Activated T-helper 1 cell treated with anti-CD3 and anti-CD28 coated beads, Interleukin-12 subunit alpha, Interleukin-12 subunit beta, Interleukin-2, Interleukin-4 antibody, amounts not matched to agents 30 ng/mL and 10 ng/mL and 1 ng/mL, durations not matched to agents 14 hours and 24 hours and 36 hours (primary cell): ENCODE measurements at regions of chr2 and their contacts with region 1.

Region 1: GRCh38 chr2:190843874-190844699 is 36.5 kb upstream of the GLS start:
- DNase-seq: peak; percentile 17
- H3K4me3 Mint-ChIP-seq: peak overlapping the region; percentile 44
- H3K27ac Mint-ChIP-seq: peak overlapping the region; percentile 96
- H3K4me1 Mint-ChIP-seq: peaks cover 15% of the 10 kb centered on the region
- H3K27me3 Mint-ChIP-seq: no peaks in the 10 kb centered on the region

Region 2: GRCh38 chr2:190648289-190649034 is 195.6 kb before region 1 on chr2:
- intact Hi-C with region 1: loop called (anchors 5 kb)
- DNase-seq: peak; percentile 84
- H3K4me3 Mint-ChIP-seq: peak overlapping the region; percentile 78
- H3K27ac Mint-ChIP-seq: peak overlapping the region; percentile 82
- H3K4me1 Mint-ChIP-seq: peaks cover 48% of the 10 kb centered on the region
- H3K27me3 Mint-ChIP-seq: no peaks in the 10 kb centered on the region

Region 3: GRCh38 chr2:190759749-190760213 is 84.3 kb before region 1 on chr2:
- intact Hi-C with region 1: no loop called
- DNase-seq: no peak
- H3K4me3 Mint-ChIP-seq: no peak overlapping the region
- H3K27ac Mint-ChIP-seq: peak overlapping the region; percentile 4
- H3K4me1 Mint-ChIP-seq: peaks cover 41% of the 10 kb centered on the region
- H3K27me3 Mint-ChIP-seq: no peaks in the 10 kb centered on the region

Region 4: DNA sequence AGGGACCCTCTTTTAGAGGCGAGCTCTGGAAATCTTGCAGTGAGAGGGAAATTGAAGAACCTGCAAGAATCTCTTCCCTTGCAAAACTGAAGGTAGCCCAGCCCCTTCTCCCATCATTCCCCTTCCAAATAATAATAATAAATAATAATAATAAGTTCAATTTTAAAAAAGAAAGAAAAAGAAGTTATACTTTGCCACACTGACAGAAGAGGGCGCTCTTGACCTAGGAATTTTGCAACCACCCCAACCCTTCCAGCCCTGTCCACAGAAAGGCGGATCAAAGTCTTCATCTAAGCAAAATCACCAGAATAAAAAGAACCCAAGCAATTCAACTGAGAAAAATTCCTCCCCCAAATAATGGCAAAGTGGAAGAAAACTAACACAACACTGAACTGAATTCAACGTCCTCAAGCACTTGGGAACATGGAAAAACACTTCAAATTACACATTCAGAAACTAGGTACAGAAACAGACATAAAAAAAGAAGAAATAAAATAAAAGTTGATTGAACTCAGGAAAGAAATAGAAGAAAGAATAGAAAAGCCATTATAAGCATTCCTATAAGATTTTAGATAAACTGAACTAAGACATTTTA is 62.4 kb before region 1 on chr2:
- intact Hi-C with region 1: loop called (anchors 1 kb)
- DNase-seq: peak; percentile 11
- H3K4me3 Mint-ChIP-seq: no peak overlapping the region
- H3K27ac Mint-ChIP-seq: peak overlapping the region; percentile 45
- H3K4me1 Mint-ChIP-seq: peaks cover 43% of the 10 kb centered on the region
- H3K27me3 Mint-ChIP-seq: no peaks in the 10 kb centered on the region

Region 5: DNA sequence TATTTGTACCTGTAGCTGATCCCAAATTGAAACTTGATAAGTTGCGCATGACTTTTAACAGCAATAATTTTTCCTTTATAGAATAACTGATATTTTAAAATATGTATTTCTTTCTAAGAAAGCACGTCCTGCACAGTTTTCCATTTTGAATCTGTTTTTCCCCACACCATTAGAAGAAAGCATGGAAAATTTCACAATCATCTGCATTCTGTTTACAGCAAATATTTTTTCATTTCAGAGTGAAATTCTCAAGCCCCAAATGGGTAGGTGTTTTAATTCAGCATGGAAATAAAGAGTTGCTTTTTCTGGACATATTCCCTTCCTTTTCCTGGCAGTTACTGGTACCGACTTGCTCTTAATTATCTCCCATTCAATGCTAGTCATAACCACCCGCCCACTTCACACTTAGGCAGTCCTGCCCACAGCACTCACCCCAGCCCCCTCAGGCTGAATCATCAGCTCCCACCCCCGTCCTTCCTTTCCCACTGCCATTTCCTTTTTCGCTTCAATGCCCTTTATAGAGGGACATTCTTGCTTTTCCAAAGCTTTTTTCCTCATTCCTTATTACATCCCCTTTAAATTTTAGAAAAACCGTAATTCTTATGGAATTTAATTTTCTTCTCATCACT is 52.6 kb before region 1 on chr2:
- intact Hi-C with region 1: loop called (anchors 1 kb)
- DNase-seq: no peak
- H3K4me3 Mint-ChIP-seq: peak overlapping the region; percentile 19
- H3K27ac Mint-ChIP-seq: peak overlapping the region; percentile 74
- H3K4me1 Mint-ChIP-seq: peaks cover 76% of the 10 kb centered on the region
- H3K27me3 Mint-ChIP-seq: no peaks in the 10 kb centered on the region

Region 6: DNA sequence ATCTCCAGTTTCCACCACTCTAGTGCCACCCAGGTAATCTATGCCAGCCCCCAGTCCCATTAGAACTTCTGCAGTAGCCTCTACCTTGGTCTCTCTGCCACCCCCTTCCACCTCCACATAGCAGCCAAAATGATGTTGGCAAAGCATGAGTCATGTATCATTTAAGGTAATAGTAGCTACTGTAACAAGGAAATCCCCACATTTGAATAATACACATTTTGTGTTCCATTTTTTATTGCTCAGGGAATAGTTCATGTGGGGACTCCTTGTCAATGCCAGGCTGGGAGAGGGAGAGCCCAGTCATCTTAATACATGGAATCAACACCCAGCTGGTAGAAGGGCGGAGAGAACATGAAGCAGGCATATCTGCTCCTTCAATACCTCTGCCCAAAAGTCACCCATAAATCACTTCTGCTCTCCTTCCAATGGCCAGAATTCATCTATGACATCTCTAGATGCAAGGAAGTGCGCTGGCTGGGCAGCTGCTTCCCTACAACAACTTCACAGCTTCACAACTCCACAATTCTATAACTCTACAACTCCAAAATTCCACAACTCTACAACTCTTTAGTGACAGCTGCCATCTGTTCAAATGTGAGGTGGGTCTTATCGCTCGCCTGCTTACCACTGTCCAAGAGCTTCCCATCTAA is 34.1 kb before region 1 on chr2:
- intact Hi-C with region 1: loop called (anchors 2 kb)
- DNase-seq: no peak
- H3K4me3 Mint-ChIP-seq: no peak overlapping the region
- H3K27ac Mint-ChIP-seq: no peak overlapping the region
- H3K4me1 Mint-ChIP-seq: peaks cover 29% of the 10 kb centered on the region
- H3K27me3 Mint-ChIP-seq: no peaks in the 10 kb centered on the region

Region 7: GRCh38 chr2:190911813-190912212 is 67.7 kb after region 1 on chr2:
- intact Hi-C with region 1: loop called (anchors 1 kb)
- DNase-seq: no peak
- H3K4me3 Mint-ChIP-seq: no peak overlapping the region
- H3K27ac Mint-ChIP-seq: peak overlapping the region; percentile 76
- H3K4me1 Mint-ChIP-seq: peaks cover 29% of the 10 kb centered on the region
- H3K27me3 Mint-ChIP-seq: no peaks in the 10 kb centered on the region

Region 8: DNA sequence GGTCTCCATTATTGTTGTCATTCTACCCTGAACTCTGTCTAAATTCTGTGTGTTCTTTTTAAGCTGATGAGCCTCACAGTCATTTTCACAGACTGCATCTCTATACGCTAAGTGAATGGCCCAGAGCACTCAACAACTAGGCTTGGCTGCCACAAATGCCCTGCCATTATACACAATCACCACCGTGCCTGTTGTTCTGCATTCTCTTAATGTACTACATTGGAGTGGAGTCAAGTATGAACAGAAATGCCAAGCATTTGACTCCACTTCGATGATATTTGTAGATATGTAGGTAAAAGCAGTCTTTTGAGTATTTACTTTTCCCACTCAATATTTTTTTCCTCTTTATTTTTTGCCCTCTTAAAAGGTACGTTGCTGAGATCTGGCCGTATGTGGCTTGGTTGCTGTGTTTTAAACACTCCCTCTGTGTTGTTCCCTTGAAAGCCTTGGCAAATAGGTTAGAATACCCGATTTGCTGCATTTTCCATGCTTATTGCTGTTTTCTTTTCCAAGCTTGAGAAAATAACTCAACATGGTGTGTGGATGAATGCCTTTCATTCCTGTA is 1386.9 kb after region 1 on chr2:
- intact Hi-C with region 1: no loop called
- DNase-seq: no peak
- H3K4me3 Mint-ChIP-seq: no peak overlapping the region
- H3K27ac Mint-ChIP-seq: no peak overlapping the region
- H3K4me1 Mint-ChIP-seq: no peaks in the 10 kb centered on the region
- H3K27me3 Mint-ChIP-seq: peaks cover 4% of the 10 kb centered on the region